H1 (cell line): ENCODE measurements at regions of chr3 and their contacts with region 1.

Region 1: GRCh38 chr3:48966876-48967361 is 23.1 kb upstream of the P4HTM start:
- DNase-seq: no peak
- H3K4me3 ChIP-seq: no peak overlapping the region
- H3K27ac ChIP-seq: no peak overlapping the region
- H3K4me1 ChIP-seq: peaks cover 3 to 8% (median 5%) of the 10 kb centered on the region in 4 experiments; a peak in 6 of 7 replicates
- H3K27me3 ChIP-seq: no peaks in the 10 kb centered on the region
- CTCF ChIP-seq: no peak
- EP300 ChIP-seq: no peak
- POLR2A ChIP-seq: no peak
- RAD21 ChIP-seq: no peak

Region 2: DNA sequence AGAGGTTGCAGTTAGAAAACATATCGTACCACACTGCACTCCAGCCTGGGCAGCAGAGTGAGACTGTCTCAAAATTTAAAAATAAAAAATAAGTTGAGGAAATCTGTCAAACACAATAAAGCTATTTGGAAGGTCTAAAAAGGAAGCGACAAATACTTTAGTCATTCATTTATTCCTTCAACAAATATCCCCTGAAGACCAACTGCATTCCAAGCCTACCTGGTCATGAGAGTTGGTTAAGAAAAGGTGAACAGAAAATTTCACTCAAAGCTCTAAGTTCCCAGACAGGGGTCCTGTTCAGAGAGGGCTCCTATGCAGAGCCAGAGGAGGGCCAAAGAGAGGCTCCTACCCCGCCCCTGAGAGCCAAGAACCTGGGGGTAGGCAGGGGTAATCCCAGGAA is 103.8 kb before region 1 on chr3:
- CTCF ChIA-PET with region 1: no interaction called
- POLR2A ChIA-PET with region 1: no interaction called
- DNase-seq: no peak
- H3K4me3 ChIP-seq: no peak overlapping the region
- H3K27ac ChIP-seq: no peak overlapping the region
- H3K4me1 ChIP-seq: no peaks in the 10 kb centered on the region
- H3K27me3 ChIP-seq: no peaks in the 10 kb centered on the region
- CTCF ChIP-seq: no peak
- EP300 ChIP-seq: no peak
- POLR2A ChIP-seq: no peak
- RAD21 ChIP-seq: no peak

Region 3: GRCh38 chr3:48952510-48953118 is 14.3 kb before region 1 on chr3:
- CTCF ChIA-PET with region 1: interaction called, 12 read pairs
- POLR2A ChIA-PET with region 1: no interaction called
- DNase-seq: peak; percentile 7 to 79
- H3K4me3 ChIP-seq: no peak overlapping the region
- H3K27ac ChIP-seq: no peak overlapping the region
- H3K4me1 ChIP-seq: peaks cover 0 to 7% (median 0%) of the 10 kb centered on the region in 4 experiments; a peak in 2 of 7 replicates
- H3K27me3 ChIP-seq: no peaks in the 10 kb centered on the region
- CTCF ChIP-seq: peak; percentile 62 to 91 (median 78)
- EP300 ChIP-seq: no peak
- POLR2A ChIP-seq: no peak
- RAD21 ChIP-seq: peak; percentile 83